H1 (cell line): ENCODE measurements at regions of chr10 and their contacts with region 1.

Region 1: DNA sequence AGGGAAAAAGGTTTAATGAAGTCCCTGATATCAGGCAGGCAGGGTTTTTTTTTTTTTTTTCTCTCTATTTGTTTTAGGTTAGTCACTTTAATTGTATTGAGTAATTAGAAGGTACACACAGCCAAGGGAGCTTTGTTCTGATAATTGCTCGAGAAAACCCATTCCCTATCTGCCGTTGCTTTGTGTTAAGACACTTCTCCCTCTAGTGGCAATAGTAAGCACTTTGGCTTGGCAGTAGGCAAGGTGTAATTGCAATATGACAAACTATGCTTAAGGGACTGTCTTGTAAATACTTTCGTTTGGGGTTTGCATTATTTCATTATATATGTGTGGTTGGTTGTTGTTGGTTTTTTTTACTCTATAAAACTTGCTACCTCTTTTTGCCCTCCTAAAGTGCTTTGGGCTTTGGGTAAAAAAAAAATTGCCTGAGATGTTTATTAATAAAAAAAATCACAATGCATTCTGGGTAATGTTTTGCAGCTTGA is 113.4 kb downstream of the BTRC start:
- DNase-seq: no peak
- H3K4me3 ChIP-seq: no peak overlapping the region
- H3K27ac ChIP-seq: no peak overlapping the region
- H3K4me1 ChIP-seq: peaks cover 1 to 6% (median 4%) of the 10 kb centered on the region in 4 experiments; a peak in 5 of 7 replicates
- H3K27me3 ChIP-seq: no peaks in the 10 kb centered on the region
- CTCF ChIP-seq: peak in 2 of 3 experiments; percentile 75 to 85; a peak in 3 of 4 replicates
- EP300 ChIP-seq: no peak
- POLR2A ChIP-seq: no peak
- RAD21 ChIP-seq: peak; percentile 56 to 69

Region 2: GRCh38 chr10:101441541-101442455 is 25.5 kb before region 1 on chr10:
- CTCF ChIA-PET with region 1: interaction called, 79 read pairs
- POLR2A ChIA-PET with region 1: interaction called, 4 read pairs
- DNase-seq: no peak
- H3K4me3 ChIP-seq: no peak overlapping the region
- H3K27ac ChIP-seq: no peak overlapping the region
- H3K4me1 ChIP-seq: peaks cover 0 to under 1% (median 0%) of the 10 kb centered on the region in 4 experiments; a peak in 1 of 7 replicates
- H3K27me3 ChIP-seq: no peaks in the 10 kb centered on the region
- CTCF ChIP-seq: peak in 2 of 3 experiments; percentile 80 to 83; a peak in 3 of 4 replicates
- EP300 ChIP-seq: no peak
- POLR2A ChIP-seq: no peak
- RAD21 ChIP-seq: peak; percentile 93 to 95

Region 3: DNA sequence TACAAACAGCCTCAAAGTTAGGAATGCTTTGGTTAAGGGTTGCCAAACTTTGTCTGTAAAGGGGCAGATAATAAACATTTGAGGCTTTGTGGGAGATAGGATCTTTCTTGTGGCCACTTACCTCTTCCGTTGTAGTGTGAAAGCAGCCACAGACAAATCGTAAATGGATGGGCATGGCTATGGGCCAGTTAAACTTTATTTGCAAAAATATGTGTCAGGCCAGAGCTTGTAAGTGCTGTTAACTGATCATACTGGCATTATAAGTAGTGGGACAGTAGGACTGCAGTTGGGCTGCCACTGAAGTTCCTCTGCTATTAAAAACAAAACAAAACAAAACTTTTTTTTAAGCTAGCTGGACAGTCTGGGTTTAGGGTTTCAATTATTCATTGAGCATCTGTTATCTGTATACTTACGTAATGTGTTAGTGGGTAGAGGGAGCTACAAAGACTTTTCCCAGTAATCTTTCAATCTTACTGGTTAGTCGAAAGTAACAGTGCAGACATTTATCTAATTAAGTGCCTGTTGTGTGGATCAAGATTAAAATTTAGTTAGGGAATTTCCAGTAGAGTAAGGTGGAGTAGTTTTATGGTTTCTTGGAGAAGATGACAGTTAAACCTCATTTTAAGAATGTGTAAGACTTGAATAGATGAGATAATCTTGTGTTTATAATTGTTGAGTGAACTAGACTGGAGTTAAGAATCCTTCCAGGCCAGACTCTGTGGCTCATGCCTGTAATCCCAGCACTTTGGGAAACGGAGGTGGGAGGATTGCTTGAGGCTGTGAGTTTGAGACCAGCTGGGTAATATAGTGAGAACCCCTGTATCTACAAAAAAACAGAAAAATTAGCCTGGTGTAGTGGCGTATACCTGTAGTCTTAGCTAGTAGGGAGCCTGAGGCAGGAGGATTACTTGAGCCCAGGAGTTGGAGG is 13.3 kb before region 1 on chr10:
- CTCF ChIA-PET with region 1: interaction called, 59 read pairs
- POLR2A ChIA-PET with region 1: no interaction called
- DNase-seq: no peak
- H3K4me3 ChIP-seq: no peak overlapping the region
- H3K27ac ChIP-seq: no peak overlapping the region
- H3K4me1 ChIP-seq: no peaks in the 10 kb centered on the region
- H3K27me3 ChIP-seq: no peaks in the 10 kb centered on the region
- CTCF ChIP-seq: no peak
- EP300 ChIP-seq: no peak
- POLR2A ChIP-seq: no peak
- RAD21 ChIP-seq: no peak

Region 4: DNA sequence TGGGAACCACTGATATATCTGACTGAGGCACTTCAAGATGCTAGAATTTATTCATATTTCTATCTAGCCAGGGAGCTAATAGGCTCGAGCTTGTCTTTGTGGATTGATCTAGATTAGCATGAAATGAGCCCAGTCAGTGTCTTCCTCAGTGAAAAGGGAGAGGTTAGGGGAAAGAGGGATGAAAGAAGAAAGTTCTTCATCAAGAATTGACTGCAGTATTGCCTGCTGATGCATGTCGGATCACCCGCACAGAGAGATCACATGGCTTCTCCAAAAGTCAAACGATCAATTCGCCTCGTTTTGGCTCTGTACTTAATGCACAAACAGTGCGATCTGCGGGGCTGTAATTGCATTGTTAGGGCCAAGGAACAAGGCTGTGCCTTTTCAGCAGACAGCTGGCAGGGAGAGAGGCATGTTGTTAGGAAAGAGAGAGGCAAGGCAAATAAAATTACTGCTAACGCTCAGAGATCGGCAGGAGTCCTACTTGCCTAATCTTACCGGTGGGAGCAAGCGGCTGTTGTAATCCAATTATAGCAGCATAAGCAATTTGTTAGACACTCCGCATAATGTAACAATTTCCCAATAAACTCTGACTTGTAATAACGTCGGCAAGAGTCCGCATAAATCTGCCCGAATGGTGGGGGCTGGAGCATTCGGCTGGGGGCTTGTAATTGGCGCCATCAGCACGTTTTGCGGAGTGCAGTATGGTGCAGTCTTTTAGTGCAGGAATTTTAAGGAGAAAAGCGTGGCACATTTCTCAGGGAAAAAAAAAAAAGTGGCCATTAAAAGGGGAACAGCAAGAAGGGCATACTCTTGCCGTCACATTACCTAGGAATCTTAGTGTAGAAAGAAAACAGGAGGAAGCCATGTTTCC is 18.6 kb after region 1 on chr10:
- CTCF ChIA-PET with region 1: interaction called, 31 read pairs
- POLR2A ChIA-PET with region 1: no interaction called
- DNase-seq: no peak
- H3K4me3 ChIP-seq: peak overlapping the region in 3 of 4 experiments; percentile 8 to 32 (median 12); a peak in 4 of 8 replicates
- H3K27ac ChIP-seq: no peak overlapping the region
- H3K4me1 ChIP-seq: peaks cover 2 to 9% (median 4%) of the 10 kb centered on the region in 4 experiments; a peak in 6 of 7 replicates
- H3K27me3 ChIP-seq: no peaks in the 10 kb centered on the region
- CTCF ChIP-seq: no peak
- EP300 ChIP-seq: no peak
- POLR2A ChIP-seq: no peak
- RAD21 ChIP-seq: no peak

Region 5: DNA sequence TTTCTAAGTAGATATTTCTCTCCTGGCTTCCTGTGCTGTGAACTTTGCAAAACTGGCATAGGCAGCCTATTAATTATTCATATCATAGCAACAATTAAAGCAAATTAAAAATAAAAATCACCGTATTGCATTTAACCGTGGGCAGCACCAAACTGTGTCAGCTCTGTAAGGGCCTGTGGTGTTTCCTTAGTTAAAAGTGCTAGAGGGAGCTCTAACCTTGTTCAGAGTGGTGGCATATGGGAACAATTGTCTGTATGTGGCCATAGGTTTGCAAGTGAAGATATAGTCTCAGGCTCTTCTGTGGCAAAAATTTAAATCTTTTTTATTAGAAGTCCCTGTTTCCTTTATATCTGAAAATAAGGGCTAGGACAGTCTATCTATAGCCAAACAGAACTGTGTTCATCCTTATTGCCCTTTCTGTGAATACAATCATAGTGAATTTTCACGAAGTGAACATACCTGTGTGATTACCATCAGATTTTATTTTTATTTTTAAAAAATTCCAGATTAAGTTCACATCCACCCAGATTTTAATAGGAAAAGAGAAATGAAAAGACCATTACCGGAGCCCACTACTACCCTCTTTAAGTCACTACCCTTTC is 28.1 kb after region 1 on chr10:
- CTCF ChIA-PET with region 1: interaction called, 12 read pairs
- POLR2A ChIA-PET with region 1: no interaction called
- DNase-seq: no peak
- H3K4me3 ChIP-seq: no peak overlapping the region
- H3K27ac ChIP-seq: no peak overlapping the region
- H3K4me1 ChIP-seq: peaks cover 0 to 4% (median 0%) of the 10 kb centered on the region in 4 experiments; a peak in 2 of 7 replicates
- H3K27me3 ChIP-seq: no peaks in the 10 kb centered on the region
- CTCF ChIP-seq: peak in 2 of 3 experiments; percentile 53 to 64; a peak in 3 of 4 replicates
- EP300 ChIP-seq: no peak
- POLR2A ChIP-seq: no peak
- RAD21 ChIP-seq: peak; percentile 65 to 71

Region 6: DNA sequence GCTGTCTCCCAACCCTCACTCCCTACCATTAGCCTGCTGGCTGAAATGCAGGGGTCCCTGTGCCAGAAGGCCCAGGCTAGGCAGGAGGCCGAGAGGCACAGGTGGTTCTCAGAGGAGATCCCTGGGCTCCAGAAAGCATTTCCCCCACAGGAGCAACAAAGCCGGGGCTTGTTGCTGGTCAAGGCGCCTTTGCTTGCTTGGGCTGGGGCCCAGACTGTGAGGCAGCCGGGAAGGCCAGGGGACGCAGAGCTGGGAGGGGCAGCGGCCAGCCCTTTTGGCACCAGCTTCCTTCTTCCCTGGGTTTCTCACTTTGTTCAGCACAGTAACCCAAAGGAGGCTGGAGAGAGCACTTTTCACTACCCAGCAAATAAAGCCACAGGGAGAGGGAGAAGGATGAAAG is 179.0 kb after region 1 on chr10:
- CTCF ChIA-PET with region 1: no interaction called
- POLR2A ChIA-PET with region 1: no interaction called
- DNase-seq: no peak
- H3K4me3 ChIP-seq: no peak overlapping the region
- H3K27ac ChIP-seq: no peak overlapping the region
- H3K4me1 ChIP-seq: peaks cover 18 to 38% (median 26%) of the 10 kb centered on the region in 4 experiments
- H3K27me3 ChIP-seq: no peaks in the 10 kb centered on the region
- CTCF ChIP-seq: no peak
- EP300 ChIP-seq: no peak
- POLR2A ChIP-seq: no peak
- RAD21 ChIP-seq: no peak